Activated T-helper 2 cell treated with anti-CD3 and anti-CD28 coated beads, Interferon-gamma antibody, Interleukin-2, Interleukin-4, amounts not matched to agents 10 μg/mL and 5 μg/mL and 100 μg/mL, durations not matched to agents 14 hours and 24 hours and 36 hours (primary cell): ENCODE measurements at regions of chr5 and their contacts with region 1.

Region 1: GRCh38 chr5:132556763-132557477 is at the start of gene RAD50:
- DNase-seq: peak; percentile 92
- H3K4me3 Mint-ChIP-seq: peak within 1 kb of the TSS; percentile 89
- H3K27ac Mint-ChIP-seq: peak within 1 kb of the TSS; percentile 93
- H3K4me1 Mint-ChIP-seq: peaks cover 33% of the 10 kb centered on the region
- H3K27me3 Mint-ChIP-seq: no peaks in the 10 kb centered on the region
- total RNA-seq, gene RAD50: 49.2 and 55.8 TPM in 2 replicates

Region 2: GRCh38 chr5:132546108-132546507 is 10.8 kb before region 1 on chr5:
- intact Hi-C with region 1: loop called (anchors 1 kb)
- DNase-seq: no peak
- H3K4me3 Mint-ChIP-seq: no peak overlapping the region
- H3K27ac Mint-ChIP-seq: peak overlapping the region; percentile 41
- H3K4me1 Mint-ChIP-seq: peaks cover 61% of the 10 kb centered on the region
- H3K27me3 Mint-ChIP-seq: peaks cover 6% of the 10 kb centered on the region